Caco-2 (cell line): ENCODE measurements at regions of chr17 and their contacts with region 1.

Region 1: DNA sequence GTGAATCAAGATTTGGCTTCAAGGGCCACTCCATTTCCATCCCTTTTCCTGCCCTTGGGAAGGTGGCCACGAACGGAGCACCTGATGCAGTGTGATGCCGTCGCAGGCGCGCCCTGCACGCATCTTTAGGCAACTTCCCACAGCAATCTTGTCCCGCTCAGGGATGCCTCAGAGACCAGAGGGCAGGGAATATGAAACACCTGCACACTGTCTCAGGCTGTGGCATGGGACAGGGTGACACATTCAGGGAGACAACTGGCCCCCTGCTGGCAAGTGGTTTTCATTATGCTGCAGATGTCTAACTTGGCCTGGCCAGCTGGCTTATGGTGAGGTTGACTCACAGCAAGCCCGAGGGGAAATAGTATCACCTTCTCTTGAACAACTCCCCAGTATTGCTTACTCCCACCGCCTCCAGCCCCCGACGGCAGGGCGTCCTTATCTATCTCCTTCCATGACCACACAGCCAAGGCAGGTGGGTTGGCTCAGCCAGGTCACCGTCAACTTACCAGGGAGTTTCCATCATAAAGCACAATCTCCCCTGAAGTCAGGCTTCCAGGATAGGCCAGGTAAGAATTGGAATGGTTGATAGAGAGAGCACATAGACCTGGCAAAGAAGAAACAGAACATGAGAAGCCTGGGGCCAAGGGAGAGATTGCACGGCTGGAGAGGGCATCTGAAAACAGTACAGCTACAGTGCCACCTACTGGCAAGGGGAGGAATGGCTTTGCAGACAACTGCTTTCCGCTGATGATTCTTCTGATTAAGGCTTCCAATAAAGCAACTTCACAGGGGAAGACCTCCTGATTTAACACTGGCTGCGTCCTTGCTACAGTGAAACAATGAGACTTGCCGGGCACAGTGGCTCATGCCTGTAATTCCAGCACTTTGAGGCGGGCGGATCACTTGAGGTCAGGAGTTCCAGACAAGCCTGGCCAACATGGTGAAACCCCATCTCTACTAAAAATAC is 21.1 kb downstream of the WIPI1 start:
- DNase-seq: peak; percentile 76 to 83
- H3K4me3 ChIP-seq: no peak overlapping the region
- H3K4me3 Mint-ChIP-seq: no peak overlapping the region
- H3K27ac Mint-ChIP-seq: no peak overlapping the region
- H3K4me1 ChIP-seq: peaks cover 12% of the 10 kb centered on the region
- H3K4me1 Mint-ChIP-seq: peaks cover 14% of the 10 kb centered on the region
- H3K27me3 ChIP-seq: no peaks in the 10 kb centered on the region
- H3K27me3 Mint-ChIP-seq: no peaks in the 10 kb centered on the region
- CTCF ChIP-seq: peak; percentile 93 to 94

Region 2: GRCh38 chr17:68172461-68172954 is 263.7 kb before region 1 on chr17:
- CTCF ChIA-PET with region 1: interaction called, 3 read pairs
- POLR2A ChIA-PET with region 1: no interaction called
- intact Hi-C with region 1: loop called (anchors 1 kb)
- DNase-seq: peak; percentile 78
- H3K4me3 ChIP-seq: no peak overlapping the region
- H3K4me3 Mint-ChIP-seq: no peak overlapping the region
- H3K27ac Mint-ChIP-seq: no peak overlapping the region
- H3K4me1 ChIP-seq: no peaks in the 10 kb centered on the region
- H3K4me1 Mint-ChIP-seq: no peaks in the 10 kb centered on the region
- H3K27me3 ChIP-seq: no peaks in the 10 kb centered on the region; the same call in 1 of the 2 replicates
- H3K27me3 Mint-ChIP-seq: no peaks in the 10 kb centered on the region
- CTCF ChIP-seq: peak; percentile 92 to 98

Region 3: GRCh38 chr17:68205251-68205807 is 230.8 kb before region 1 on chr17:
- CTCF ChIA-PET with region 1: no interaction called
- POLR2A ChIA-PET with region 1: no interaction called
- intact Hi-C with region 1: loop called (anchors 1 kb)
- DNase-seq: peak; percentile 81 to 90
- H3K4me3 ChIP-seq: peak overlapping the region; percentile 91
- H3K4me3 Mint-ChIP-seq: peak overlapping the region; percentile 67
- H3K27ac Mint-ChIP-seq: no peak overlapping the region
- H3K4me1 ChIP-seq: peaks cover 7% of the 10 kb centered on the region
- H3K4me1 Mint-ChIP-seq: peaks cover 2% of the 10 kb centered on the region
- H3K27me3 ChIP-seq: peaks cover 3% of the 10 kb centered on the region; the same call in 1 of the 2 replicates
- H3K27me3 Mint-ChIP-seq: peaks cover 6% of the 10 kb centered on the region
- CTCF ChIP-seq: peak; percentile 87 to 93

Region 4: GRCh38 chr17:68247445-68248198 is 188.5 kb before region 1 on chr17 and contains the start of gene AMZ2:
- CTCF ChIA-PET with region 1: interaction called, 7 read pairs
- POLR2A ChIA-PET with region 1: no interaction called
- intact Hi-C with region 1: loop called (anchors 5 kb)
- DNase-seq: peak; percentile 93 to 97
- H3K4me3 ChIP-seq: peak within 1 kb of the TSS; percentile 79
- H3K4me3 Mint-ChIP-seq: peak within 1 kb of the TSS; percentile 97
- H3K27ac Mint-ChIP-seq: peak within 1 kb of the TSS; percentile 81
- H3K4me1 ChIP-seq: peaks cover 6% of the 10 kb centered on the region
- H3K4me1 Mint-ChIP-seq: peaks cover 7% of the 10 kb centered on the region
- H3K27me3 ChIP-seq: no peaks in the 10 kb centered on the region
- H3K27me3 Mint-ChIP-seq: peaks cover 12% of the 10 kb centered on the region
- CTCF ChIP-seq: no peak
- total RNA-seq, gene AMZ2: 52.2 and 60.2 TPM in 2 replicates

Region 5: DNA sequence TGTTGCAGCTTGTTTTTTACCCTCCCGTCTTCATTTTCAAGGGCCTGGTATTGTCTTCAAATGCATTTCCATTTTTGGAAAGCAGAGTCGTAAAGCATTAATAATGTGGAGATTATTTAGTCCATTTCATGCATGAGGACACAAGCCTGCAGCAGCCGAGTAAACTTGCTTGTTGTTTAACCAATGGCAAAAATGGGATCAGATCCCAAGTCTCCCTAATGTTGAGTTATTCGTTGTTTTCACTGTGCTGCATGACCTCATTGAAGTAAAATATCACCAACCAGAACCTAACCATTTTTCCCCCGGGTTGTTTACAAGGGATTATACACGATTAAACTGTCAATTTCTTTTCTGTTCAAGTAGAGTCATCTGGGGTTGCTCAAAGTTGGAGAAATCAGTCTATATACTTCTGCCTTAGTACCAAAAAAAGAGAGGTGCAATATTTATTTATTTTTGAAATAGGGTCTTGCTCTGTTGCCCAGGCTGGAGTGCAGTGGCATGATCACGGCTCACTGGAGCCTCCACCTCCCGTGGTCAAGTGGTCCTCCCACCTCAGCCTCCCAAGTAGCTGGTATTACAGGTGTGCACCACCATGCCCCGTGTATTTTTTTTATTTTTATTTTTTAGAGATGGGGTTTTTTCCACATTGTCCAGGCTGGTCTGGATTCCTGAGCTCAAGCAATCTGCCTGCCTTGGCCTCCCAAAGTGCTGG is 176.0 kb before region 1 on chr17:
- CTCF ChIA-PET with region 1: no interaction called
- POLR2A ChIA-PET with region 1: interaction called, 3 read pairs
- intact Hi-C with region 1: loop called (anchors 1 kb)
- DNase-seq: no peak
- H3K4me3 ChIP-seq: no peak overlapping the region
- H3K4me3 Mint-ChIP-seq: peak overlapping the region; percentile 79
- H3K27ac Mint-ChIP-seq: peak overlapping the region; percentile 57
- H3K4me1 ChIP-seq: peaks cover 8% of the 10 kb centered on the region; the same call in 1 of the 2 replicates
- H3K4me1 Mint-ChIP-seq: no peaks in the 10 kb centered on the region
- H3K27me3 ChIP-seq: no peaks in the 10 kb centered on the region
- H3K27me3 Mint-ChIP-seq: no peaks in the 10 kb centered on the region
- CTCF ChIP-seq: no peak

Region 6: DNA sequence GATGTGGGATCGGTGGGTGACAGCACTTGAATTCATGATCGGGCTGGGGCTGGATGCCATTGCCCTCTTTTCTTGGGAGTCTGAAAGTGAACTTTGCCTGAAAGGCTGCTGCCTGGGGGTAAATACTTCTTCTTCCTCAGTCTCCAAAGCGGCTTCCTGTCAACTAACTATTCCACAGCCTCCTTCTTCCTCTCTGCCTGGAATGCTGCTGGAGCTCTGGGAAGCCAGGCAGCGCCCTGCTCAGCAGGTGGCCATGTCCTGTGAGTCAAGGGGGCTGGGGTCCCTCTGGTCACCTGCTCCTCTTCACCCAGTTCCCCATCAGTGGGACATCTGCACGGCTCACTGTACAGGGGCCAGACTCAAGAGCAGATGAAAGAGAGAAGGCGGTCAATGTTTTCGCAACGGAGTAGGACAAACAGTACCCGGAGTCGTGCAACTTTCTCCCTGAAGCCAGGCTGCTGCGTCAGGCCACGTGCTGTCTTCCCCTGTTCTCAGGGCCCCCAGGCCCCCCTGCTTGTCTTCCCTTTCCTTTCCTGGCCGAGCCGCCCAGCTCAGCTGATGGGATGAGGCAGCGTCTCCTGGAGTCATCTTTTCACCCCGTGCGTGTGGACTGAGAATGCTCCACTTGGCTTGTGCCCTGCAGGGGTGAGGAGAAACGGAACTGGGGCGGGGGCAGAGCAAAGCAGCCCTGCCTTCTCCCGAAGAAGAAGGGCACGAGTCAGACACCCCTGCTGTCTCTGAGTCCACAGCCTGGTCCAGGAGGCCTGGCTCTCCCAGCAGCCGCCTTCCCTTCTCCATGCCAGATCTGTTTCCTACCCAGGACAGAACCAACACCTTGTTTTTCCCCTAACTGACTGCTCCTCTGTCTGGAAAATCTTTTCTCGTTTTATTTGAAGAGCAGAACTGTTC is 58.0 kb before region 1 on chr17:
- CTCF ChIA-PET with region 1: no interaction called
- POLR2A ChIA-PET with region 1: no interaction called
- intact Hi-C with region 1: no loop called
- DNase-seq: peak in 1 of 2 experiments; percentile 50
- H3K4me3 ChIP-seq: no peak overlapping the region
- H3K4me3 Mint-ChIP-seq: peak overlapping the region; percentile 13
- H3K27ac Mint-ChIP-seq: peak overlapping the region; percentile 18
- H3K4me1 ChIP-seq: peaks cover 25% of the 10 kb centered on the region
- H3K4me1 Mint-ChIP-seq: peaks cover 19% of the 10 kb centered on the region
- H3K27me3 ChIP-seq: no peaks in the 10 kb centered on the region
- H3K27me3 Mint-ChIP-seq: no peaks in the 10 kb centered on the region
- CTCF ChIP-seq: no peak

Region 7: DNA sequence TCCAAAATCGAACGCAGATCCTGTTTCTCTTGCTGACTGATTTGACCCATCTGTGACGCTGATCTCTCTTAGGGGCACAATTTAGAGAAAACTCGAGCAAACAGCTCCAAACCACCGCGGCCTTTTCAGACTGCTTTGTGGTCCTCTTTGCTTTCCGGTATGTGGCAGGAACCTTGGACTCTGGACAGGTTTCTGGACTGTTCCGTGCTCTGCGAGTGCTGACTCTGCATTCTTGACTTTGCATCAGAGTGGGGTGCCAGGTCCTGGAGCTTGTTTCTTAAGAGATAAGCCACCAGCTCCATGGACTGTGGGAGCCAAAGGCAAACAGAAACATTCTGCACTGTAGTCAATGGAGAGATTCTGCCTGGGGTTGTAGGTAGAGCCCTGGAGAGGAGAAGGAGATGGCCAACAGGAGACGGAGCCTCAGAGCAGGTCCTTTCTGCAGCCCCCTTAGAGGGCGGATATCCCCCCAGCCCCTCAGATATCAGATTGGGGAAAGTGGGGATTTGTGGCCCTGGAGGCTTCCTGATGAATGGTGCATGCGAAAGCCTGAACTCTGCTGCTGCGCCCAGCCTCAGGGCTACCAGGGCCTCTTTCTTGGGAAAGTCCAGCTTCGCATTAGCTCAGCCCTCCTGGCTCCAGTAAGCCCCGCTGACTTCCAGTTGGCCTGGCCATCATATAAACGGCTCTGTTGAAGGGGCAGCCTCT is 44.4 kb before region 1 on chr17:
- CTCF ChIA-PET with region 1: no interaction called
- POLR2A ChIA-PET with region 1: no interaction called
- intact Hi-C with region 1: no loop called
- DNase-seq: no peak
- H3K4me3 ChIP-seq: no peak overlapping the region
- H3K4me3 Mint-ChIP-seq: no peak overlapping the region
- H3K27ac Mint-ChIP-seq: no peak overlapping the region
- H3K4me1 ChIP-seq: no peaks in the 10 kb centered on the region
- H3K4me1 Mint-ChIP-seq: peaks cover 7% of the 10 kb centered on the region
- H3K27me3 ChIP-seq: no peaks in the 10 kb centered on the region
- H3K27me3 Mint-ChIP-seq: no peaks in the 10 kb centered on the region
- CTCF ChIP-seq: no peak

Region 8: DNA sequence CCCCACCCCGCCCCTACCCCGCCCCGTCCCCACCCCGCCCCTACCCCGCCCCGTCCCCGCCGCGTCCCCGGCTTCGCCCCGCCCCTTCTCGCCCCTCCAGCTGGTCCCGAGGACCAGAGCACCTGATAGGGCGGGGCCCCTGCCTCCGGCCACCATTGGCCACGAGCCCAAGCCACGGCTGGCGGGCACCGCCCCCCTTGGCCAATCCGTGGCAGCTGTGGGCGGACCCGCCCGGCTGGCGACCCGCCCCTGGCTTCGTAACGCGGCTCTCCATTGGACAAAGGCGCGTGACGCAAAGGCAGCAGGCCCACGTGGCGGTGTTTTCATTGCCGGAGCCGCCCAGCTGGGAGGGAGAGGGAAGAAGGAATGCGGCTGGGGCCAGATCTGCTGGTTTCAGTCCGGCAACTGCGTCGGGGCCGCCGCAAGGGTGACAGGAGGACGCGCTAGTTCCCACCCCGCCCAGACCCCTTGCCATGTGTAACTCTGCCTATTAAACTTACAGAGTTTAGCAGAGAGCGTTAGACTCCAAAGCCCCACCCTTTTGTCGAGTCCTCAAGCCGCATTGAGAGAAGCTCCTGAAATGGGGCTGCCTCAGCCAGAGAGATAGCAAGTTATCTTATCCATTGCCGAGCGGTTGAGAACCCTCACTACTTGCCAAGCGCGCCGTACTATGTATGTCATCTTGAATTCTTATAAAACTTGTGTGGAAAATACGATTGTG is 21.5 kb after region 1 on chr17:
- CTCF ChIA-PET with region 1: interaction called, 12 read pairs
- POLR2A ChIA-PET with region 1: interaction called, 6 read pairs
- intact Hi-C with region 1: loop called (anchors 2 kb)
- DNase-seq: peak; percentile 99 to 100
- H3K4me3 ChIP-seq: peak overlapping the region; percentile 59
- H3K4me3 Mint-ChIP-seq: peak overlapping the region; percentile 95
- H3K27ac Mint-ChIP-seq: peak overlapping the region; percentile 84
- H3K4me1 ChIP-seq: peaks cover 16% of the 10 kb centered on the region; the same call in 1 of the 2 replicates
- H3K4me1 Mint-ChIP-seq: peaks cover 13% of the 10 kb centered on the region
- H3K27me3 ChIP-seq: no peaks in the 10 kb centered on the region
- H3K27me3 Mint-ChIP-seq: peaks cover 3% of the 10 kb centered on the region
- CTCF ChIP-seq: no peak